Left colon (tissue), 2 donors: ENCODE measurements at regions of chr15 and their contacts with region 1.

Region 1: DNA sequence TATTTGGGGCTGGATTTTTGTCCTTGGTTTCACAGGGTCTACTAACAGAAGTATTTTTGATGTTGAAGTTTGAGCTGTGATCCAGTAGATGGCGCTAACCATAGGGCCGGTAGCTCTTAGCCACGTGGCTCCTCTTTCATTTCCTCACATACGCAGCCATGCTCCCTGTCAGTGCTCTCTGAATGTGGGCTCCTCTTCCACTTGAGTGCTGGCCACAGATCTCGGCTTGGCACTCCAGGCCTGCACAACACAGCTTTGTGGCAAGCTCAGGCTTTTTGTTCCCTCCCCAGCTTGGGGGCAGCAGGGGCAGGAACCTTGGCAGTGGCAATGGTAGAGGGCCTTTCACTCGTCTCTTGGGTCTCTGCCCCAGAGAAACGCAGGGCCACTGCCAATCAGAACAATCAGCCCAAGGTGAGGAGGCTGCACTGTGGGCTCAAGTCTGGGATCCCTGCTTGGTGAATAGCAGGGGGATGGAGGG is 18.6 kb upstream of the DNAAF4 start:
- DNase-seq: no peak
- ATAC-seq: peak; percentile 59

Region 2: DNA sequence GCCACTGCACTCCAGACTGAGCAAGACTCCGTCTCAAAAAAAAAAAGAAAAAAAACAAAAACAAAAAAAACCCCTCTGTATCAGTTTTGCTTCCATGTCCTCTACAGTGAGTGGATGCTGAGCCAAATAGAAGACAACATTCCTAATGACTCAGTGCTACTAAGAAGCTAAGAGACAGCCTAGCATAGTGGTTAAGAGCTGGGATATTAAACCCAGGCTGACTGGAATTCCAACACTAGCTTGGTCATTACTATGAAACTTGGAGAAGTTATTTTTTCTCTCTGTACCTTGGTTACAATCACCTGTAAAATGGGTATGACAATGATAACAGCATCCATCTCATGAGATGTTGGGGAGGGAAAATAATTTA is 122.4 kb after region 1 on chr15:
- intact Hi-C with region 1: loop called in 1 of 2 experiments (anchors 5 kb)
- DNase-seq: no peak
- ATAC-seq: no peak